ENCODE measurements at regions of chr7 and their contacts with region 1.

Region 1: GRCh38 chr7:43572516-43573049 is 10.3 kb upstream of the STK17A start:
- DNase-seq: peak in 1 of 6 donors; percentile 40
- ATAC-seq: peak in 3 of 4 donors; percentile 67 to 93 (median 89)
- H3K4me3 ChIP-seq: no peak overlapping the region
- H3K27ac ChIP-seq: no peak overlapping the region
- H3K4me1 ChIP-seq: no peaks in the 10 kb centered on the region
- H3K27me3 ChIP-seq: no peaks in the 10 kb centered on the region
- CTCF ChIP-seq: no peak

Region 2: DNA sequence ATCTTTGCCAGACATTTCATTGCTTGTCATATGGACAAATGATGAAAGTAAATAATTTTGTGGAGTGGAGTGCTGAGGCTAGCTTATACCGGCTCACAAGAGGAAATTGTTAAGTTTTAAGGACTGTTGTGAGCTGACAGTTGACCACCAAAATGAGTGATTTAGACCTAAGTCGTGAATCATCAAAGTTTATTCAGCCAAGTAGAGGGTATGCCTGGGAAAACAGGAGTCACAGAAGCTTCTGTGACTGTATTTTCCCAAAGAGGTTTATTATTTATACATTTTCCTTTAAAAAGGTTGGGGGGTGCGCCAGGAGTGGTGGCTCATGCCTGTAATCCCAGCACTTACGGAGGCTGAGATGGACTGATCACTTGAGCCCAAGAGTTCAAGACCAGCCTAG is 274.9 kb after region 1 on chr7:
- intact Hi-C with region 1: loop called in 1 of 3 experiments (anchors 10 kb)
- DNase-seq: no peak
- ATAC-seq: no peak
- H3K4me3 ChIP-seq: no peak overlapping the region
- H3K27ac ChIP-seq: no peak overlapping the region
- H3K4me1 ChIP-seq: no peaks in the 10 kb centered on the region
- H3K27me3 ChIP-seq: no peaks in the 10 kb centered on the region
- CTCF ChIP-seq: no peak